ENCODE measurements at regions of chr12 and their contacts with region 1.

Region 1: DNA sequence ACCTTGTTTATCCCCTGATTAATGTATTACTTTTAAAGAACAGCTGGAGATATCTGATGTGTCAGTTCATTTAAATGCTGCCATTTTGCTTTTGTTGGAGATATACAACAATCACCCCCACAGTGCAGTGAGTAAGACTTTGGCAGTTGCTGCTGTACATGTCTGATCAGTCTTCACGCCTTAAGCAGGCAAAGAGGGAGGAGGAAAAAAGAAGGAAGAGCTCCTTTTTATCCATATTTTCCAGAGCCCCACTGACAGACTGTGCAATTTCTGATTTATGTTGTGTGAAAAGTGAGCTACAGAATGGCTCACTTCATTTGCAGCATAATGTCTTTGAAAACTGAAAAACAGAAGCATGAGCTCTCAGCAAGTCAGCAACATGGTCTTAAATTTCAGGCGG is 319.7 kb upstream of the LRIG3 start:
- DNase-seq: no peak
- ATAC-seq: no peak
- H3K4me3 ChIP-seq: no peak overlapping the region
- H3K27ac ChIP-seq: no peak overlapping the region
- H3K4me1 ChIP-seq: no peaks in the 10 kb centered on the region
- H3K27me3 ChIP-seq: no peaks in the 10 kb centered on the region
- CTCF ChIP-seq: no peak
- POLR2A ChIP-seq: no peak

Region 2: DNA sequence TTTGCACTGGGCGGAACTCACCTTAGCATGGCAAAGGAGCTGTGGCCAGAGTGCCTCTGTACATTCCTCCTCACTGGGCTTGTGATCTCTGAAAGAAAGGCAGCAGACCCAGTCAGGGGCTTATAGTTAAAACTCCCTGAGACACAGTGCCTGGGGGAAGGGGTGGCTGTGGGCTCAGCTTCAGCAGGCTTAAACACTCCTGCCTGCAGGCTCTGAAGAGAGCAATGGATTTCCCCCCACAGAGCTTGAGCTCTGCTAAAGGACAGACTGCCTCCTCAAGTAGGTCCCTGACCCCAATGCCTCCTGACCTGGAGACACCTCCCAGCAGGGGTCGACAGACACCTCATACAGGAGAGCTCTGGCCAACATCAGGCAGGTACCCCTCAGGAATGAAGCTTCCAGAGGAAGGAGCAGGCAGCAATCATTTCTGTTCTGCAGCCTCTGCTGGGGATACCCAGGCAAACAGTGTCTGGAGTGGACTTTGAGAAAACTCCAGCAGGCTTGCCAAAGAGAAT is 28.3 kb after region 1 on chr12:
- intact Hi-C with region 1: loop called in 1 of 10 experiments (anchors 1 kb)
- DNase-seq: no peak
- ATAC-seq: no peak
- H3K4me3 ChIP-seq: no peak overlapping the region
- H3K27ac ChIP-seq: no peak overlapping the region
- H3K4me1 ChIP-seq: no peaks in the 10 kb centered on the region
- H3K27me3 ChIP-seq: no peaks in the 10 kb centered on the region
- CTCF ChIP-seq: no peak
- POLR2A ChIP-seq: no peak